Caco-2 (cell line): ENCODE measurements at regions of chr2 and their contacts with region 1.

Region 1: GRCh38 chr2:16311521-16312440 is 353.9 kb downstream of the CYRIA start:
- DNase-seq: no peak
- H3K4me3 ChIP-seq: no peak overlapping the region
- H3K4me3 Mint-ChIP-seq: no peak overlapping the region
- H3K27ac Mint-ChIP-seq: no peak overlapping the region
- H3K4me1 ChIP-seq: 0 out of 2 replicates have a peak, but pooled peaks cover under 1% of the 10 kb centered on the region
- H3K4me1 Mint-ChIP-seq: no peaks in the 10 kb centered on the region
- H3K27me3 ChIP-seq: no peaks in the 10 kb centered on the region
- H3K27me3 Mint-ChIP-seq: no peaks in the 10 kb centered on the region
- CTCF ChIP-seq: no peak

Region 2: DNA sequence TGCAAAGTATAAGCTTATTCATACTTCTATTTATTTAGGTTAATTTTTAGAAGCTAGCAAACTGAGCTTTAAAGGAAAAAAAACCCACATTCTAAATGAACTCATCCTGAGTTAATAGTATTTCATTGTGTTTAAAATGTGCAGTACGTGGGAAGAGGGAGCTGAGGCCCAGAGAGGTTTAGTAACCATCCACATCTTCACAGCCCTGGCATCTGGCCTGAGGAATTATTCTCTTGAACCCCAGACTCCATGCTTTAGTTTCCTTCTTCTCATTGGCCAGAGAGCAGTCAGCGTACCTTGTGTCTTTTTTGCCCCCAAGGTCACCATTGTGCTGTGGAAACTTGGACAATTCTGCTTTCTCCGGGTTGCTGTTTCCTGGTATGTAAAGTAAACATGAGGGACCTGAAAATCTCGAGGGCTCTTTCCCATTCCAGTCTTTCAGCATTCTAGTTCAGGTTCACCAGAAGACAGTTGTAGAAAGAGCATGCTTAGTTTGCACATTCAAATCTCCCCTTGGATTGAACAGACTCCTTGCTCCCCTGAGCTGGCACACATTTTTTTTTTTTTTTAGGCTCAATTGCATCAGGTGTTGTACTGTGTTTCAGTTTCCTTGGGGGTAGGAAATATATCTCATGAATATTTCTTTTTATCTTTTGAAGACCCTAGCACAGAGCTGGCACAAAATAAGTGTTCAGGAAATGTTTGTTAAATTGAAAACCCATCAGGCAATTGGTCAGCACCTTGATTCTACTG is 290.0 kb before region 1 on chr2:
- CTCF ChIA-PET with region 1: no interaction called
- POLR2A ChIA-PET with region 1: interaction called, 12 read pairs
- intact Hi-C with region 1: no loop called
- DNase-seq: no peak
- H3K4me3 ChIP-seq: no peak overlapping the region
- H3K4me3 Mint-ChIP-seq: no peak overlapping the region
- H3K27ac Mint-ChIP-seq: no peak overlapping the region
- H3K4me1 ChIP-seq: no peaks in the 10 kb centered on the region
- H3K4me1 Mint-ChIP-seq: peaks cover 11% of the 10 kb centered on the region
- H3K27me3 ChIP-seq: no peaks in the 10 kb centered on the region
- H3K27me3 Mint-ChIP-seq: no peaks in the 10 kb centered on the region
- CTCF ChIP-seq: no peak

Region 3: DNA sequence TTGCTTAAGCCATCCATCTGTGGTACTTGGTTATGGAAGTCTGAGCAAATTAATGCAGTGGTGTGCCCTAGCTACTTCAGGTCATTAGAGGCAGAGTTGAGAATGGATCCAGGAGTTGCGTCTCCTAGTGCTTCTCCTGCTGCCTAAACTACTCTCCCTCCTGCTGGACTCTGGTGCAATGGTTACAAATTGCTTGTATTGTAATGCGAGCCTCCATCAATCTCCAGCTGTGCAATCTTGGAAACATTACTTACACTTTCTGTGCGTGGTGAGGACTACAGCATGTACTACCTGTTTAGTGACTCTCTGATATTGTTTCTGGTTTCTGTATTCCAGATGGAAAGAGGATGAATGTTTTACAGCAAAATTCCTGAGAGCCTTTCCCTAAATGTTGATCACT is 472.9 kb after region 1 on chr2:
- CTCF ChIA-PET with region 1: no interaction called
- POLR2A ChIA-PET with region 1: no interaction called
- intact Hi-C with region 1: no loop called
- DNase-seq: no peak
- H3K4me3 ChIP-seq: no peak overlapping the region
- H3K4me3 Mint-ChIP-seq: no peak overlapping the region
- H3K27ac Mint-ChIP-seq: no peak overlapping the region
- H3K4me1 ChIP-seq: no peaks in the 10 kb centered on the region
- H3K4me1 Mint-ChIP-seq: no peaks in the 10 kb centered on the region
- H3K27me3 ChIP-seq: no peaks in the 10 kb centered on the region
- H3K27me3 Mint-ChIP-seq: peaks cover 6% of the 10 kb centered on the region
- CTCF ChIP-seq: no peak